AG04450 (cell line): ENCODE measurements at regions of chr19 and their contacts with region 1.

Region 1: DNA sequence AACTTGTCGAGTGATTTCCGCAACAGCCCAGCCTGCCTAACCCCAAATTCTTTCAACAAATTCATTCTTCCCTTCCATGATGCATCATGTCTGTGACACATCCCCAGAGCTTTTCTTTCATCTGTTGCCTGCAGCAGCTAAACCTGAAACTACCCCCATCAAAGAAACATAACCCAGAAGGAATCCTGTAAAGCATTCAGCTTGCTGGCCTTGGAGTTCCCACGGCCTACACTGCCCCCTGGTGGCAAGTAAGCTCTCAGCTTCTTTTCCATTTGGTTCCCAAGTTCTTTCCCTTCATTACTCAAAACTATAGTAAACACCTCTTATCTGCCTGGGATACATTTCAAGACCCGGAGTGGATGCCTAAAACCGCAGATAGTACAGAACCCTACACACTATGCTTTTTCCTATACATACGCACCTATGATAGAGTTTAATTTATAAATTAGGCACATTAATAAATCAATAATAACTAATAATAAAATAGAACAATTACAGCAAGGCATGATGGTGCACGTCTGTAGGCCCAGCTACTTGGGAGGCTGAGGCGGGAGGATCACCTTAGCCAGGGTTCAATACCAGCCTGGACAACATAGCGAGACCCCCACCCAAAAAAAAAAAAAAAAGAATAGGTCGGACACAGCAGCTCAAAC is 7.4 kb downstream of the ETHE1 start:
- DNase-seq: peak; percentile 94
- H3K4me3 ChIP-seq: no peak overlapping the region
- H3K27ac ChIP-seq: no peak overlapping the region
- H3K27me3 ChIP-seq: no peaks in the 10 kb centered on the region
- CTCF ChIP-seq: peak; percentile 89

Region 2: DNA sequence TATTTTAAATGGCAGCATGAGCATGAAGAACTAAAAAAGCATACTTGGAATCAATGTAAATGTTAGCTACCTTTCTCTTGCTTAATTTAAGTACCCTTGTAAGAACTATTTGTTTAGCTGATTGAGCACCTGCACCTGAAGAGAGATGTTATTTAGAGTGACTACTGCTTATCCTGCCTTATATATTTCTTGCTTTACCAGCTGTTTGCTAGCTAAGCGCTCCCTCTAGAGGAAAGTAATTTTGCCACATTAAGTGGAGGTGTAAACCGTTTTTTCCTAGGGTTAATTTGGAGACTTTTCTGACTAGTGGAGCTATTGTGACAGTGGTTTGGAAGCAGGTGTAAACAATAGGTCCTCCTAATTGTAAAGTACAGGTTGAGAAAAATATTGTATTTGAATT is 417.6 kb before region 1 on chr19:
- CTCF ChIA-PET with region 1: interaction called, 13 read pairs
- POLR2A ChIA-PET with region 1: no interaction called
- DNase-seq: no peak
- H3K4me3 ChIP-seq: no peak overlapping the region
- H3K27ac ChIP-seq: no peak overlapping the region
- H3K27me3 ChIP-seq: no peaks in the 10 kb centered on the region
- CTCF ChIP-seq: no peak

Region 3: GRCh38 chr19:43425567-43426392 is 93.8 kb before region 1 on chr19:
- CTCF ChIA-PET with region 1: interaction called, 70 read pairs
- POLR2A ChIA-PET with region 1: no interaction called
- DNase-seq: no peak
- H3K4me3 ChIP-seq: no peak overlapping the region
- H3K27ac ChIP-seq: no peak overlapping the region
- H3K27me3 ChIP-seq: peaks cover 7% of the 10 kb centered on the region
- CTCF ChIP-seq: peak; percentile 71

Region 4: GRCh38 chr19:43438291-43439096 is 81.1 kb before region 1 on chr19:
- CTCF ChIA-PET with region 1: interaction called, 385 read pairs
- POLR2A ChIA-PET with region 1: no interaction called
- DNase-seq: peak; percentile 65
- H3K4me3 ChIP-seq: no peak overlapping the region
- H3K27ac ChIP-seq: peak overlapping the region; percentile 21
- H3K27me3 ChIP-seq: peaks cover 5% of the 10 kb centered on the region
- CTCF ChIP-seq: no peak

Region 5: DNA sequence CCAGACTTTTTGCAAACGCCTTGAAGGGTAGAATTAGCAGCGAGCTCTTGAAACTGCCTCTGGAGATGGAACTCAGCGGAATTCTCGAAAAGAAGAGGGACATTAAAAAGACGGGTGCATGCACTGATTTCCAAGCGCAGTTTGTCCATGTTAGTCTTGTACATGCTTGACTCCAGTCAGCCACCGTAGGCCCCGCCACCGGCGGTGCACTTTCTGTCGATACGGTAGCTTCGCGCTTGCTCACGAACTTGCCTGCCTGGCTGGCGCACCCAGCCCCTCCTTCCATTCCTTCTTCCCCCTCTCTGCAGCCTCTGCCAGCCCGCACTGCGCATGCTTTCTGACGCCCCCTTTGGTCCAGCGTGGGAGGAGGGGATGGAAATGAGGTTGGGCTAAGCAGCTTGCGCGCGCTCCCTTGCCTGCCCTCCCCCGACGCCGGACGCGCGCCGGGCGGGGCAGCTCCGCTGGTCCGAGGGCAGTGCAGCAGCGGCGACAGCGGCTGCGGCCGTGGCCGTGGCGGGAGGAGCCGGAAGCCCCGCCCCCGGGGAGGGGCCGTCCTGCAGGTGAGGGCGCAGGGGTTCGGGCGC is 13.5 kb after region 1 on chr19 and contains the start of gene ZNF575:
- CTCF ChIA-PET with region 1: interaction called, 26 read pairs
- POLR2A ChIA-PET with region 1: interaction called, 6 read pairs
- DNase-seq: peak; percentile 93
- H3K4me3 ChIP-seq: peak within 1 kb of the TSS; percentile 68
- H3K27ac ChIP-seq: peak within 1 kb of the TSS; percentile 91
- H3K27me3 ChIP-seq: no peaks in the 10 kb centered on the region
- CTCF ChIP-seq: no peak
- polyA plus RNA-seq, gene ZNF575: 0.16 and 0.17 TPM in 2 replicates

Region 6: GRCh38 chr19:43575156-43575950 is 55.8 kb after region 1 on chr19 and contains the starts of genes PINLYP and XRCC1:
- CTCF ChIA-PET with region 1: no interaction called
- POLR2A ChIA-PET with region 1: no interaction called
- DNase-seq: peak; percentile 94
- H3K4me3 ChIP-seq: peak within 1 kb of the TSS; percentile 95
- H3K27ac ChIP-seq: peak within 1 kb of the TSS; percentile 61
- H3K27me3 ChIP-seq: peaks cover 2% of the 10 kb centered on the region
- CTCF ChIP-seq: peak; percentile 6; the same call in 1 of the 2 replicates
- polyA plus RNA-seq, gene PINLYP: 1.8 and 2.7 TPM in 2 replicates
- polyA plus RNA-seq, gene XRCC1: 15.2 and 17.7 TPM in 2 replicates

Region 7: DNA sequence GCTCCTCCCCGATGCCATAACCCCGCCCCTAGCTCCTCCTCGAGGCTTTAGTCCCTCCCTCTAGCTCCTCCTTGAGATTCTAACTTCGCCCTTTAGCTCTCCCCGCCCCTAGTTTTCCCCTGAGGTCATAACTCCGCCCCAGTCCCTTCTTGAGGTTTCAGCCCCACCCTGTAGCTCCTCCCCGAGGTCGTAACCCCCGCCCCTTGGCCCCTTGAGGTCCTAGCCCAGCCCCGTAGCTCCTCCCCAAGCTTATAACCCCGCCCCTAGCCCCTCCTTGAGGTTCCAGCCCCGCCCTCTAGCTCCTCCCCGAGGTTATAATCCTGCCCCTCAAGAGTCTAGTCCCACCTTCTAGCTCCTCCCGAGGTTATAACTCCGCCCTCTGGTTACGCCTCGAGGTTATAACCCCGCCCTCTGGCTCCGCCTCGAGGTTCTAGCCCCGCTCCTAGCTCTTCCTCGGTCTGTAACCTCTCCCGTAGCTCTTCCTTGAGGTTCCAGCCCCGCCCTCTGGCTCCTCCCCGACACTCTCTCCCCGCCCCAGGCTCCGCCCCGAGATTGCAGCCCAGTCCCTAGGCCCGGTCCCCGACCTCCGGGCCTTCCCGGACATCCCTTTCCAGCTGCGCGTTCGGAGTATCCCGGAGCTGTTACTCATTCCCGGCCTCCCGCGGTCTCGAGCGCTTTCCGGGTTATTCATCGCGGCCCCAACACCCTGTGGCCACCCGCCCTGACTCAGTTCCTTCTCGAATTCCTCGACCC is 149.0 kb after region 1 on chr19:
- CTCF ChIA-PET with region 1: interaction called, 11 read pairs
- POLR2A ChIA-PET with region 1: no interaction called
- DNase-seq: peak; percentile 100
- H3K4me3 ChIP-seq: peak overlapping the region; percentile 94
- H3K27ac ChIP-seq: peak overlapping the region; percentile 98
- H3K27me3 ChIP-seq: no peaks in the 10 kb centered on the region
- CTCF ChIP-seq: no peak